Posterior vena cava (tissue), 2 donors: ENCODE measurements at regions of chr5 and their contacts with region 1.

Region 1: GRCh38 chr5:146813346-146814157 is 65.0 kb downstream of the PPP2R2B start:
- DNase-seq: no peak

Region 2: GRCh38 chr5:146878476-146879172 is 65.1 kb after region 1 on chr5 and contains the start of gene PPP2R2B:
- intact Hi-C with region 1: loop called in 1 of 2 experiments (anchors 10 kb)
- DNase-seq: peak; percentile 81
- total RNA-seq, gene PPP2R2B: 17.3 to 53.1 TPM